Colonic mucosa (tissue), 4 donors: ENCODE measurements at regions of chr1 and their contacts with region 1.

Region 1: DNA sequence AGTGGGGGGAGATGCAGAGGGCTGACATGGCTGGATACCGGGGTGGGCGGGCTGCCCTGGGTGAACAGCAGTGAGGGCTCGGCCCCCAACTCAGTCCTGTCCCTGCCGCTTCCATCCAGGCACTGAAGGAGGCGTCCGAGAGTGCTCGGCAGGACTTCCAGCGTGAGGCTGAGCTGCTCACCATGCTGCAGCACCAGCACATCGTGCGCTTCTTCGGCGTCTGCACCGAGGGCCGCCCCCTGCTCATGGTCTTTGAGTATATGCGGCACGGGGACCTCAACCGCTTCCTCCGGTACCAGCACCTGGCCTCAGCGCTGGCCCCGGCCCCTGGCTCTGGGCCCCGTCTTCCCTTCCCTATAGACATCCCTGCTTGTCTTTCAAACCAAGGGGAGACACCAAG is 15.6 kb downstream of the NTRK1 start:
- DNase-seq: no peak
- H3K4me3 ChIP-seq: no peak overlapping the region
- H3K27ac ChIP-seq: no peak overlapping the region
- H3K4me1 ChIP-seq: no peaks in the 10 kb centered on the region
- H3K27me3 ChIP-seq: no peaks in the 10 kb centered on the region
- CTCF ChIP-seq: no peak

Region 2: GRCh38 chr1:156664767-156665411 is 211.4 kb before region 1 on chr1:
- intact Hi-C with region 1: no loop called
- DNase-seq: peak; percentile 47
- H3K4me3 ChIP-seq: no peak overlapping the region
- H3K27ac ChIP-seq: peak overlapping the region; percentile 82
- H3K4me1 ChIP-seq: peaks cover 22% of the 10 kb centered on the region
- H3K27me3 ChIP-seq: no peaks in the 10 kb centered on the region
- CTCF ChIP-seq: no peak

Region 3: DNA sequence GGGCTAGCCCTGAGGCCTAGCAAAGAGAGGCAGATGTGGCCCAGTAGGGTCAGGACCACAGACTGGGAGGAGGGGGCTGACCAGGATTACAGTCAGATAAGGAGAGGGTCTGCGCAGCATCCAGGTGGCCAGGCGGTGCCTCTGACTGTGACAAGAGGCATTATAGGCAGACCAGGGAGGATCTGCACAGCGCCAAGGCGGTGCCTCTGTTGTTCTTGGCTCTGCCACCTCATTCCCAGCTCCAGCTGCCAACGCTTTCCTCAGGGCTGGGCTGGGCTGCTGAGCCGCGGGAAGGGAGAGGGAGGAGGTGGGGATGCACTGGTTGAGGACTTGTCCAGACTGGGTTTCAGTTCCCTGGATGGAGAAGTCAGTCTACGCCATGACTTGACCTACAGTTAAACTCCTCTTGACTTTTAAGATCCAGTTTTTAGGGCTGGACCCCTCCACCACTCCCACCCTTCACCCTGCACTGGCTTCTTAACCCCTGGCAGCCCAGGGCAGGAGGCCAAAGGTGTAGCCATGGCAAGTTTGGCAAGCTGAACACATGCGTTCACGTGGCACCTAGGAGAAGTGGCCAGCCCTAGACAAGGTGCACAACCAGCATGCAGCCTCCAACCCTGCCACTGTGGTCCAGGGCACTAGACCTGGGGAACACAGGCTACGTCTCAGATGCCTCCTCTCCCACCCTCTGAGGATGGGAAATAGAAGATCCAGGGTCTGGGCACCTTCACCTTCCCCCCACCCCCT is 166.4 kb before region 1 on chr1:
- intact Hi-C with region 1: loop called (anchors 10 kb)
- DNase-seq: peak; percentile 73
- H3K4me3 ChIP-seq: no peak overlapping the region
- H3K27ac ChIP-seq: no peak overlapping the region
- H3K4me1 ChIP-seq: peaks cover 13% of the 10 kb centered on the region
- H3K27me3 ChIP-seq: peaks cover 6% of the 10 kb centered on the region
- CTCF ChIP-seq: no peak

Region 4: DNA sequence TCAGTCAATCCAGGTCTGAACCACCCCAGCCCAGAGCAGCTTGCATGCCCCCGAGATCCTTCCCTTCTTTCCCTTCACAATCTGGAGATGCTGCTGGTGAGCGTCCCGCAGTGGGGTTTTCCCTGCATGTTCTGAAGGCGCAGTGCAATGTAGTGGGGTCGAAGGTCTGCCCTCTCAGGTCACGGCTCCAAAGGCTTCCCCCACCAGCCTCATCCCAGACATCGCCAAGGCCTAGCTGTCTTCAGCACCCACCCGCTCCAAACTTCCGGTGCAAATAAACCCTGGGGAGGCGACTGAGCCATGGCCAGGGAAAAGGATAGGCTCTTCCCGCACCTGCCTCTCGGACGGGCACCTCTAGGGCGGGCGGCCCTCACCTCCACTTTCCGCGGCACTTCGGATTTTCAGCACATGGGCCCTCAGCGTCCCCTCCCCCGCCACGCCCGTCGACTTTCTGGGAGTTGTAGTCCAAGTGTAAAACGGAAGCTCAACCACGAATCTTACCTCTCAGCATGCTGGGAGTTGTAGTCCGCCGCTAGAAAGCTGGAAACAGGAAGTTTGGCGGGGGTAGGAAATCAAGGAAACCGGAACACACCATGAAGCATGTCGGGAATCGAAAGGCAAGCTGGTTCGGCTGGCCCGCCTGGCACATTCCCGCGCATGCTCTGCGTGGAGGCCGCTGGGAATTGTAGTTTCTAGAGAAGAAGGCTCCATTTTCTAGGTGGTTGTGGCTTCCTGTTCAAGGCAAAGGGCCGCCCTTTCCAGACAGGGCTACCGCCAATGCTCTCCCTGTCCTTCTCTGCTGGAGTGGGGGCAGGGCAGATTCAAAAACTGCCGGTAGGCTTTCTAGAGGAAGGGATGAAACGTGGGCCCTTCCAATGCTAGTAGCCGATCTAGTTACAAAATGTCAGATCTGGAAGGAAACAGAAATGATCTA is 135.3 kb before region 1 on chr1 and contains the start of gene MRPL24:
- intact Hi-C with region 1: no loop called
- DNase-seq: peak; percentile 99
- H3K4me3 ChIP-seq: peak within 1 kb of the TSS; percentile 46
- H3K27ac ChIP-seq: peak within 1 kb of the TSS; percentile 62
- H3K4me1 ChIP-seq: peaks cover 1% of the 10 kb centered on the region
- H3K27me3 ChIP-seq: no peaks in the 10 kb centered on the region
- CTCF ChIP-seq: no peak
- total RNA-seq, gene MRPL24: 39.1 to 86.7 TPM

Region 5: DNA sequence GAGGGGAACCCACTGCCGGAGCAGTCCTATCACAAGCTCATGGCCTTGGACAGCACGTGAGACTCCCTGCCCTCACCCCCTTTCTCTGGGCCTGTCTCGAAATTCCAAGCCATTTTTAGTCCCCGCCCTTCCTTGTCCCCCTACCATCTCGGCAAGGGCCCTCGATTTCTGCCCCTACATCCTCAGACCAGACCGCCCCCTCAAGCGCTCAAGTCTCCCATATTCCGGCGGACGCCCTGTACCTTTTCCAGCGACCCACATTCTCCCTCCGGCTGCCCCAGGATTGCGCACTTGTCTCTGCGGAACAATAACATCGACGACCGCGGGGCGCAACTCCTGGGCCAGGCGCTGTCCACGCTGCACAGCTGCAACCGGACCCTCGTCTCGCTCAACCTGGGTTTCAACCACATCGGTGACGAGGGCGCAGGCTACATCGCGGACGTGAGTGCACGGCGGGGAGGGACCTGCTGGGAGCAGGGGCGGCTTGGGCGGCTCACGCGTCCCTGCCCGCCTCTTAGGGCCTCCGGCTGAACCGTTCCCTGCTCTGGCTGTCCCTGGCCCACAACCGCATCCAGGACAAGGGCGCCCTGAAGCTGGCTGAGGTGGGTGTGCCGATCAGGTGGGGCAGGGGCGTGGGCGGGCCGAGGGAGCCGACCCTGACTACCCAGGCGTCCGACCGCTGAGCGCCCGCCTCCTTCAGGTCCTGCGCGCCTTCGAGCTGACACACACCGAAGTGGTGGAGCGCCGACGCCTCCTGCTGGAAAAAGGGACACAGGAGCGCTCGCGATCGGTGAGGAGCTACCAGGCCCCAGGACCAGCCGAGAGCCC is 51.1 kb after region 1 on chr1:
- intact Hi-C with region 1: no loop called
- DNase-seq: peak; percentile 76
- H3K4me3 ChIP-seq: peak overlapping the region; percentile 18
- H3K27ac ChIP-seq: no peak overlapping the region
- H3K4me1 ChIP-seq: no peaks in the 10 kb centered on the region
- H3K27me3 ChIP-seq: peaks cover 49% of the 10 kb centered on the region
- CTCF ChIP-seq: peak; percentile 57

Region 6: GRCh38 chr1:156961709-156962108 is 85.4 kb after region 1 on chr1:
- intact Hi-C with region 1: no loop called
- DNase-seq: no peak
- H3K4me3 ChIP-seq: no peak overlapping the region
- H3K27ac ChIP-seq: no peak overlapping the region
- H3K4me1 ChIP-seq: no peaks in the 10 kb centered on the region
- H3K27me3 ChIP-seq: no peaks in the 10 kb centered on the region
- CTCF ChIP-seq: no peak